CD4-positive, alpha-beta T cell (primary cell): ENCODE measurements at regions of chr1 and their contacts with region 1.

Region 1: GRCh38 chr1:181772714-181773113 is 288.8 kb downstream of the ZNF648 start:
- DNase-seq: no peak
- ATAC-seq: no peak
- H3K4me3 ChIP-seq: no peak overlapping the region
- H3K4me3 Mint-ChIP-seq: no peak overlapping the region
- H3K27ac ChIP-seq: no peak overlapping the region
- H3K27ac Mint-ChIP-seq: no peak overlapping the region
- H3K4me1 ChIP-seq: no peaks in the 10 kb centered on the region
- H3K4me1 Mint-ChIP-seq: no peaks in the 10 kb centered on the region
- H3K27me3 ChIP-seq: peaks cover 0 to 4% of the 10 kb centered on the region in 2 experiments
- H3K27me3 Mint-ChIP-seq: peaks cover 21% of the 10 kb centered on the region
- CTCF ChIP-seq: no peak

Region 2: DNA sequence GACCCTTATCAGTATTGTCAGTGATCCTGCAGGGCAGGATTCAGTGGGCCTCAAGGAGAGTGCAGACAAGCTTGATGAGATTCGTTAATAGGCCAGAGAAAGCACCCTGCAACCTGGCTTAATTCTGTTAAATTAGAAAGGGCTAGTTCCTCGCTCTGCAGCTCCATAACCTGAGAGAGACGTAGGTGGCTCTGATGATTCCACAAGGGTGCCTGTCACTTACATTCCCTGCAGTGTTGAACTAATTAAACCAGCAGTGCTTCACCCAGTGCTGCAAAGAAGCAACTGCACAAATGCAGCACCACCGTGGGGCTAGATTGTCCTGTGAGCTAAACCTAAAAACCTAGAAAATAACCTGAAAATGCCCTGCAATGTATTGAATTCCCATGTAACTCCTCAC is 18.6 kb before region 1 on chr1:
- CTCF ChIA-PET with region 1: no interaction called
- POLR2A ChIA-PET with region 1: no interaction called
- intact Hi-C with region 1: loop called in 1 of 2 experiments (anchors 2 kb)
- DNase-seq: no peak
- ATAC-seq: no peak
- H3K4me3 ChIP-seq: no peak overlapping the region
- H3K4me3 Mint-ChIP-seq: no peak overlapping the region
- H3K27ac ChIP-seq: no peak overlapping the region
- H3K27ac Mint-ChIP-seq: no peak overlapping the region
- H3K4me1 ChIP-seq: no peaks in the 10 kb centered on the region
- H3K4me1 Mint-ChIP-seq: no peaks in the 10 kb centered on the region
- H3K27me3 ChIP-seq: no peaks in the 10 kb centered on the region
- H3K27me3 Mint-ChIP-seq: peaks cover 4% of the 10 kb centered on the region
- CTCF ChIP-seq: no peak

Region 3: GRCh38 chr1:182374101-182374834 is 601.6 kb after region 1 on chr1:
- CTCF ChIA-PET with region 1: no interaction called
- POLR2A ChIA-PET with region 1: no interaction called
- intact Hi-C with region 1: no loop called
- DNase-seq: no peak
- ATAC-seq: no peak
- H3K4me3 ChIP-seq: no peak overlapping the region
- H3K4me3 Mint-ChIP-seq: no peak overlapping the region
- H3K27ac ChIP-seq: no peak overlapping the region
- H3K27ac Mint-ChIP-seq: no peak overlapping the region
- H3K4me1 ChIP-seq: no peaks in the 10 kb centered on the region
- H3K4me1 Mint-ChIP-seq: no peaks in the 10 kb centered on the region
- H3K27me3 ChIP-seq: no peaks in the 10 kb centered on the region
- H3K27me3 Mint-ChIP-seq: no peaks in the 10 kb centered on the region
- CTCF ChIP-seq: no peak